ENCODE measurements at regions of chr14 and their contacts with region 1.

Region 1: GRCh38 chr14:64423987-64424386 is 35.8 kb downstream of the MTHFD1 start:
- DNase-seq: no peak
- ATAC-seq: no peak
- H3K4me3 ChIP-seq: no peak overlapping the region
- H3K4me3 Mint-ChIP-seq: no peak overlapping the region
- H3K27ac ChIP-seq: no peak overlapping the region
- H3K27ac Mint-ChIP-seq: no peak overlapping the region
- H3K4me1 ChIP-seq: no peaks in the 10 kb centered on the region
- H3K4me1 Mint-ChIP-seq: no peaks in the 10 kb centered on the region
- H3K27me3 ChIP-seq: no peaks in the 10 kb centered on the region
- H3K27me3 Mint-ChIP-seq: no peaks in the 10 kb centered on the region

Region 2: GRCh38 chr14:64444984-64445845 is 21.2 kb after region 1 on chr14:
- CTCF ChIA-PET with region 1: interaction called, 6 to 11 read pairs
- POLR2A ChIA-PET with region 1: interaction called in 1 of 2 experiments, 5 read pairs
- DNase-seq: peak in 19 of 35 experiments; percentile 2 to 71 (median 12)
- ATAC-seq: peak; percentile 60 to 86 (median 78)
- H3K4me3 ChIP-seq: no peak overlapping the region
- H3K4me3 Mint-ChIP-seq: peak overlapping the region in 1 of 3 donors; percentile 20
- H3K27ac ChIP-seq: peak overlapping the region; percentile 55
- H3K27ac Mint-ChIP-seq: peak overlapping the region; percentile 79 to 83
- H3K4me1 ChIP-seq: peaks cover 8 to 32% of the 10 kb centered on the region in 2 experiments
- H3K4me1 Mint-ChIP-seq: peaks cover 26 to 40% (median 36%) of the 10 kb centered on the region in 3 donors
- H3K27me3 ChIP-seq: no peaks in the 10 kb centered on the region
- H3K27me3 Mint-ChIP-seq: no peaks in the 10 kb centered on the region

Region 3: DNA sequence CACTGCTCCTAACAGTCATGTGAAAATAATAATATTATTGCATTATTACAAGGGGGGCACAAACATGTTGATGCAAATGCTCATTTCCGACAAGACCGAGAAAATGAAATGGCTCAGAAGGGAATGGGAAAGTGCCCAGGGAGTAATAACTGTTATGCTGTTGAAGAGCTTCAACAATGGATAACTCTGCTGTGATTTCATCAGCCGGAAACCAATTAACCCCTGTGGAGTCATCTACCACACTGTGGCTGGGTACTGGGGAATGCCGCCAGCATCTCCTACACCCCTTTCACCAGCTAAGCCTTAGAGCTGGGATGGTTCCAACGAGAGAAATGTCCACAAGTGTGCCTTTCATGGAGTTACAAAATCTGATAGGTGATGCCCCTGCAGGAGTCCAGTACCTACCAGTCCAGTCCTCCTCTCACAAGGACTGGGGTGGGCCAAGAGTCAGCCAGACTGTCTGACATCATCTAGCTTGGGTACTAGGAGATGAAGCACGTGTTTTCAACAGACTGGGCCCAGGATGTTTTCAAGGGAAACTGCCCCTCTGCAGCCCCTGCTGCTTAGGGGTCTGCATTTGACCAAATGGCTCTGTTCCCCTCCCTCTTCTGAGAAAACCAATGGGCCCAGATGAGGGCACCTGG is 1552.9 kb after region 1 on chr14:
- CTCF ChIA-PET with region 1: interaction called in 1 of 2 experiments, 10 read pairs
- POLR2A ChIA-PET with region 1: no interaction called
- DNase-seq: no peak
- ATAC-seq: no peak
- H3K4me3 ChIP-seq: no peak overlapping the region
- H3K4me3 Mint-ChIP-seq: no peak overlapping the region
- H3K27ac ChIP-seq: no peak overlapping the region
- H3K27ac Mint-ChIP-seq: no peak overlapping the region
- H3K4me1 ChIP-seq: no peaks in the 10 kb centered on the region
- H3K4me1 Mint-ChIP-seq: no peaks in the 10 kb centered on the region
- H3K27me3 ChIP-seq: peaks cover 0 to 7% of the 10 kb centered on the region in 2 experiments
- H3K27me3 Mint-ChIP-seq: peaks cover 0 to 2% of the 10 kb centered on the region in 2 donors